Right lobe of liver (tissue), 6 donors: ENCODE measurements at regions of chr19 and their contacts with region 1.

Region 1: GRCh38 chr19:6133231-6133630 is 2.2 kb upstream of the ACSBG2 start:
- DNase-seq: no peak
- ATAC-seq: no peak
- H3K4me3 ChIP-seq: no peak overlapping the region
- H3K27ac ChIP-seq: no peak overlapping the region
- H3K4me1 ChIP-seq: no peaks in the 10 kb centered on the region
- H3K27me3 ChIP-seq: no peaks in the 10 kb centered on the region
- CTCF ChIP-seq: no peak
- POLR2A ChIP-seq: no peak

Region 2: DNA sequence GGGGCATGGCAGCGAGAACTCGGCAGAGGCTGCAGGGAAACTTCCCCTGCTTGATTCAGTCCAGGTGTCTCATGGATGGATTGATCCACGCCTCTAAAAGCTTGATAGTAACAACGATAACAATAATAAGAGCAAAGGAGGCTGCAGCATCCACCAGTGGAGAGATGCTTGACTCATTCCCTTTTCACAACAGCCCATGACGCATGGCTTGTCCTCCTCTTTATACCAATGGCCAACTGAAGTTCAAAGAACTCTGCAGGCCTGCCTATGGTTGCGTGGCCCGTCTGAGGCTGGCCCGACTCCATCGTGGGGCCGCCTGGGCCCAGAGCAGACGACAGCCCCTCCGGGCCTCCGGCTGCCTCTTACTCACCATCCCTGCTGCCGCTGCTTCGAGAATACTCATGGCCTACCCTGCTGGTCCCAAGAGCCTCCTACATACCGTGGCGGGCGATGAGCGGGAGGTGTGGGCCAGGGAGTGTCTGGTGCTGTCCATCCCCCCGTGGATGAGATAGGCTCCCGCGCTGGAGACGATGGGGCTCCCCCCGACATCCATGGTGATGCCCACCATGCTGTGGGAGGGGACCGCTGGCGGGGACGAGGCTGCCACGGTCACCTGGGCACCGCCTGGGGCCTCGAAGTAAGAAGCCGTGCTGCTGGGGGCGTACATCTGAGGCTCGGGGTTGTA is 93.5 kb before region 1 on chr19:
- intact Hi-C with region 1: loop called in 1 of 2 experiments (anchors 5 kb)
- DNase-seq: peak in 2 of 3 donors; percentile 5 to 35
- ATAC-seq: peak in 1 of 4 donors; percentile 16
- H3K4me3 ChIP-seq: no peak overlapping the region
- H3K27ac ChIP-seq: no peak overlapping the region
- H3K4me1 ChIP-seq: no peaks in the 10 kb centered on the region
- H3K27me3 ChIP-seq: no peaks in the 10 kb centered on the region
- CTCF ChIP-seq: no peak
- POLR2A ChIP-seq: no peak

Region 3: GRCh38 chr19:6092329-6093286 is 40.6 kb before region 1 on chr19:
- intact Hi-C with region 1: no loop called
- DNase-seq: peak; percentile 68 to 75 (median 74)
- ATAC-seq: peak; percentile 79 to 90 (median 83)
- H3K4me3 ChIP-seq: peak overlapping the region in 2 of 3 donors; percentile 16 to 21
- H3K27ac ChIP-seq: peak overlapping the region in 2 of 3 donors; percentile 39 to 57
- H3K4me1 ChIP-seq: peaks cover 0 to 9% (median 0%) of the 10 kb centered on the region in 4 donors
- H3K27me3 ChIP-seq: no peaks in the 10 kb centered on the region
- CTCF ChIP-seq: no peak
- POLR2A ChIP-seq: no peak